GM12878 (cell line): ENCODE measurements at regions of chr1 and their contacts with region 1.

Region 1: DNA sequence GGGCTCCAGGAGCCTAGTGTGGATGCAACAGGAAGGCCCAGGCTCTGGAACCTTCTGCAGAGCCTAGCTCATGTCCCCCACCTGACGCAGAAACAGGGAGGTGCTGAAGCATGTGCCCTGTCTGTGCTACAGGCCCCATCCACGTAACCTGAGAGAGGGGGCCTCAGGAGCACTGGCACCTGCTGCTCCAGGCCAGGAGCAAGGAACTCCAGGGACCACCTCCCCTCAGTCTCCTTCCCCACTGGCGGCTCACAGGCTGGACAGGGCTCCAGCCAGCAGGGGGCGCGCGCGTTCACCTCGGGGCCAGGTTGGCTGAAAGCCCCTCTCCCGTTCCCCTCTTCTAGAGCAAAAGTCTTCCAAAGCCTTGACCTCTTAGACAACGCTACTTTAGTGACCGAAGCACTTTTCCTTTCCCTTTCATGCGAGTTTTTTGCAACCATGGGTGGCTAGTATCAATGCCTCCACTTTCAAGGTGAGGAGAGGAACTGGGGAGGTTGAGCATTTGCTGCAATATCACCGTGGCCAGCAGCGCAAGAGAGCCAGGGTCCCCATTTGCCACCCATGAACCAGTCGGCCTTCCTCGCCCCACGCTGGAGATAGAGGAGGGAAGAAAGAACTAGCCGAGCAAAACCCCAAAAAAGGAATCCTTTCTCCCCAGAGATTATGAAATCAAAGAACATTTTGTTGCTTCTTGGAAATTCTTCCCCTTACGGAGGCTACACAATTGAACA is 52.4 kb upstream of the GPR157 start:
- DNase-seq: peak; percentile 43
- ATAC-seq: peak; percentile 75
- H3K4me3 ChIP-seq: peak overlapping the region; percentile 90
- H3K27ac ChIP-seq: peak overlapping the region; percentile 84
- H3K4me1 ChIP-seq: peaks cover 17% of the 10 kb centered on the region
- H3K27me3 ChIP-seq: no peaks in the 10 kb centered on the region
- CTCF ChIP-seq: peak; percentile 93 to 98 (median 97); a peak in 5 of 6 replicates
- EP300 ChIP-seq: no peak
- POLR2A ChIP-seq: peak; percentile 56; the same call in 1 of the 2 replicates
- RAD21 ChIP-seq: peak; percentile 23; the same call in 1 of the 2 replicates

Region 2: GRCh38 chr1:9121496-9122409 is 59.6 kb before region 1 on chr1:
- CTCF ChIA-PET with region 1: interaction called, 21 read pairs
- POLR2A ChIA-PET with region 1: interaction called, 7 read pairs
- RAD21 ChIA-PET with region 1: interaction called, 3 read pairs
- SMC1A ChIA-PET with region 1: interaction called, 11 read pairs
- in situ Hi-C with region 1: no loop called
- intact Hi-C with region 1: loop called (anchors 5 kb)
- DNase-seq: peak; percentile 71
- ATAC-seq: peak; percentile 89
- H3K4me3 ChIP-seq: peak overlapping the region; percentile 53; the same call in 1 of the 2 replicates
- H3K27ac ChIP-seq: peak overlapping the region; percentile 74
- H3K4me1 ChIP-seq: peaks cover 40% of the 10 kb centered on the region
- H3K27me3 ChIP-seq: no peaks in the 10 kb centered on the region
- CTCF ChIP-seq: no peak
- EP300 ChIP-seq: peak; percentile 33 to 41; a peak in 1 of 4 replicates
- POLR2A ChIP-seq: no peak
- RAD21 ChIP-seq: no peak

Region 3: GRCh38 chr1:9128520-9129265 is 52.6 kb before region 1 on chr1 and contains the start of gene GPR157:
- CTCF ChIA-PET with region 1: interaction called, 17 read pairs
- POLR2A ChIA-PET with region 1: interaction called, 7 read pairs
- RAD21 ChIA-PET with region 1: interaction called, 12 read pairs
- SMC1A ChIA-PET with region 1: interaction called, 7 read pairs
- in situ Hi-C with region 1: no loop called
- intact Hi-C with region 1: loop called (anchors 5 kb)
- DNase-seq: no peak
- ATAC-seq: peak; percentile 81
- H3K4me3 ChIP-seq: peak within 1 kb of the TSS; percentile 85
- H3K27ac ChIP-seq: peak within 1 kb of the TSS; percentile 23
- H3K4me1 ChIP-seq: peaks cover 28% of the 10 kb centered on the region
- H3K27me3 ChIP-seq: no peaks in the 10 kb centered on the region
- CTCF ChIP-seq: peak in 2 of 3 experiments; percentile 8 to 26; a peak in 1 of 6 replicates
- EP300 ChIP-seq: no peak
- POLR2A ChIP-seq: peak; percentile 31; the same call in 1 of the 2 replicates
- RAD21 ChIP-seq: no peak
- polyA plus RNA-seq, gene GPR157: 0.66 to 1.1 TPM

Region 4: DNA sequence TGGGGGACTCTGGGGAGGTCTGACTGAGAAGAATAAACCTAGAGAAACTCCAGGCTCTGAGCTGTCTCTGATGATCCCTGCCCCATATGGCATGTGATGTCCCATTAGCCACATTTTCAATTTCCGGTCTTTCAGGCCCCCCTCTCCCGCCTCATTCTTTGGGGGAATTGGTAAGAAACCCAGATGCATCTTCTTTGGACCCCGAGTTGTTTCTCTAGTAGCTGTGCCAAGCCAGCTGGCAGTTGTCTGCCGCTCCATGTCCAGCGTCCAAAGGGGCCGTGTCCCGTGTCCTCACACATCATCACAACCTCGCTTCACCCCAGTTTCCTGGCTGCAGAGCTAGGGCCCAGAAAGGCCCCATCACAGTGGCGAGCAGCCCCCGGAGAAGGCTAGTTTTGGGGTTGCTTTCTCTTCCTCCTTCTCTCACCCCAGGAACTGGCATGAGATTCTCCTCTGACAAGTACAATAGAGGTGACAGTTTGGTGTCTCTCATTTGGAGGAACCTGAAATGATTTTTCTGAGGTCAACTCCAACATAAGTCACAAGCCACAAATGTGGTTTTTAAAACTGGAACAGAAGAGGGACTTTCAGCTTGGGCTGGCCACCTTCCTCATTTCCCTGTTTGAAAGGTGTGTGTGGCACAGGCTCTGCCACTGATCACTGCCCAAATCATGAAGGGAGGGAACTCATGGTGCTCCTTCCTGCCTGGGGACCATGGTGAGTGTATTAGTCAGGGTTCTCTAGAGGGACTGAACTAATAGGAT is 46.1 kb before region 1 on chr1:
- CTCF ChIA-PET with region 1: interaction called, 30 read pairs
- POLR2A ChIA-PET with region 1: interaction called, 5 read pairs
- RAD21 ChIA-PET with region 1: interaction called, 12 read pairs
- SMC1A ChIA-PET with region 1: interaction called, 7 read pairs
- in situ Hi-C with region 1: no loop called
- intact Hi-C with region 1: no loop called
- DNase-seq: peak; percentile 67
- ATAC-seq: peak; percentile 88
- H3K4me3 ChIP-seq: 0 out of 2 replicates have a peak overlapping the region, but pooled peaks have one; percentile 5
- H3K27ac ChIP-seq: 0 out of 2 replicates have a peak overlapping the region, but pooled peaks have one; percentile 17
- H3K4me1 ChIP-seq: peaks cover 28% of the 10 kb centered on the region
- H3K27me3 ChIP-seq: no peaks in the 10 kb centered on the region
- CTCF ChIP-seq: no peak
- EP300 ChIP-seq: no peak; a peak in 1 of 4 replicates
- POLR2A ChIP-seq: no peak
- RAD21 ChIP-seq: no peak

Region 5: DNA sequence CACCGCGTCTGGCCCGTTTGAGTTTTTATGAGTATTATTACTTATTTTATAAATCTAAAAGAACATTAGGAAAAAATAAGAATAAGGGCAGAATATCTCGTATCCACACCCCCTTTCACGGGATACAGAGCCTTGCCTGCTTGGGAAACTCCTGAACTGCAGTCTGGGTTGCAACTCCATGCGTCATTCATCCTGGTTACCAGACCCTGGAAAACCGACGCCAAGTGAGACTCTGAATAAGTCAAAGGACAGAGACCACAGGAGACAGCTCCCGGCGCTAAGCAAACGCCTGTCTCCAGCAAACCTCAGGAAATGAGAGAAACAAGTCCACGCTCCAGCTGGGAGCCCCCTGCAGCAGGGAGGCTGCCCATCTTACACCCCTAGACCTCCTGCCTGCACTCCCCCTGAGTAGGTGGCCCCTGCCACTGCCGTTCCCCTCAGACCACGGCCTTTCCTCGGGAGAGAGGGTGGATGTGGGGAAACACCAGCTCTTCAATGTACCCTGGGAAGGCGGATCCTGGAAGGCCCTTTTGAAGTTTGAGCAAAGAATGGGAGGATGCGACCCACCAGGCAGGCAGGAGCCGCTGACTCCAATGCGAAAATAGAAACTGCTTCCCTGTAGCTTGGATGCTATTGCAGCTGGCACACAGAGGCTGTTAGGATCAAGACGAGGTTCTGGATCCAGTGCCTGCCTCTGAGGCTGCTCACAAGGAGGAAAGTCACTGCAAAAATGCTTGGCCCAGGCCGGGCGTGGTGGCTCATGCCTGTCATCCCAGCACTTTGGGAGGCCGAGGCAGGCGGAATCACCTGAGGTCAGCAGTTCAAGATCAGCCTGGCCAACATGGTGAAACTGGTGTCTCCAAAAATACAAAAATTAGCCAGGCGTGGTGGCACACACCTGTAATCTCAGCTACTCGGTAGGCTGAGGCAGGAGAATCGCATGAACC is 14.8 kb before region 1 on chr1:
- CTCF ChIA-PET with region 1: interaction called, 33 read pairs
- POLR2A ChIA-PET with region 1: interaction called, 6 read pairs
- RAD21 ChIA-PET with region 1: interaction called, 3 read pairs
- SMC1A ChIA-PET with region 1: interaction called, 7 read pairs
- in situ Hi-C with region 1: no loop called
- intact Hi-C with region 1: no loop called
- DNase-seq: no peak
- ATAC-seq: no peak
- H3K4me3 ChIP-seq: no peak overlapping the region
- H3K27ac ChIP-seq: no peak overlapping the region
- H3K4me1 ChIP-seq: peaks cover 39% of the 10 kb centered on the region
- H3K27me3 ChIP-seq: no peaks in the 10 kb centered on the region
- CTCF ChIP-seq: no peak
- EP300 ChIP-seq: no peak
- POLR2A ChIP-seq: no peak
- RAD21 ChIP-seq: no peak

Region 6: DNA sequence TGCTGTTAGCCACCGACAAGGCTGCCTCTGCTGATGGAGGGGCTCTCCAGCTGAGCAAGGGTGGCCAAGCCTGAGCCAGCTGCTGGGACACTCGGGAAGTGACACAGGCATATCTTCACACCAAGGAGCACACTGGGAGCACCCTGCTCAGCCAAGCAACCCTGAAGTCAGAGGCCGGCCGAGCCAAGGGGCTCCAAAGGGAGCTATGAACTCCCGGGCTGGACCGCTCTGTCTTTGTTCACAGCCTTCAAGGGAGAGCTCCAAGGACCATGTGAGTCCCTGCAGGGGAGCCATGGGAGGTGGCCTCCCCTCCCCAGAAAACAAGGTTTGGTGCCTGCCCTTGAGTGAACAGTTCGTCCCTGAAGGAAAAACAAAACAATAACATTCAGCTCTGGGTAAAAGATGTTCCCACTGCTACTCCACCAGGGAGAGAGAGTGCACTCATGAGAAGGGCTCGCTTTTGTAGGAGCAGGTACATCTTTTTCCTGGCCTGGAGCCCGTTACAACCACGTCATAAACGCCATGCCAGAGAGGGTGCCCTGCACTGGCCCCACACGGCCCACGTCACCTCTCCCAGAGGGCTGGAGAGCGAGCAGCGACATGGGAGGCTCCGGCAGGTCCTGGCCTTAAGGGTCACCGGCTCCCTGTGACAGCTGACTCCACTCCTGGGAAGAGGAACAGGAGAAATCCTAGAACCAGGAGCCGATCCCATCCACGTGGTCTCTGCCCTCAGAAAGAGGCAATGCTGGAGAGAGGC is 301.7 kb after region 1 on chr1:
- CTCF ChIA-PET with region 1: no interaction called
- POLR2A ChIA-PET with region 1: no interaction called
- RAD21 ChIA-PET with region 1: no interaction called
- SMC1A ChIA-PET with region 1: no interaction called
- in situ Hi-C with region 1: no loop called
- intact Hi-C with region 1: no loop called
- DNase-seq: no peak
- ATAC-seq: no peak
- H3K4me3 ChIP-seq: no peak overlapping the region
- H3K27ac ChIP-seq: no peak overlapping the region
- H3K4me1 ChIP-seq: no peaks in the 10 kb centered on the region
- H3K27me3 ChIP-seq: peaks cover 0 to 2% of the 10 kb centered on the region in 2 experiments; a peak in 1 of 4 replicates
- CTCF ChIP-seq: no peak
- EP300 ChIP-seq: no peak
- POLR2A ChIP-seq: no peak
- RAD21 ChIP-seq: no peak